BJ (cell line): ENCODE measurements at regions of chr19 and their contacts with region 1.

Region 1: GRCh38 chr19:35363001-35363590 is 4.8 kb downstream of the FFAR3 start:
- DNase-seq: no peak
- H3K4me3 ChIP-seq: no peak overlapping the region
- H3K27me3 ChIP-seq: no peaks in the 10 kb centered on the region; the same call in none of the 2 replicates
- CTCF ChIP-seq: no peak

Region 2: GRCh38 chr19:35279985-35280821 is 82.9 kb before region 1 on chr19:
- CTCF ChIA-PET with region 1: no interaction called
- POLR2A ChIA-PET with region 1: no interaction called
- DNase-seq: no peak
- H3K4me3 ChIP-seq: no peak overlapping the region
- H3K27me3 ChIP-seq: peaks cover 13% of the 10 kb centered on the region
- CTCF ChIP-seq: no peak

Region 3: GRCh38 chr19:35352448-35353304 is 10.4 kb before region 1 on chr19:
- CTCF ChIA-PET with region 1: interaction called, 18 read pairs
- POLR2A ChIA-PET with region 1: no interaction called
- DNase-seq: peak; percentile 3
- H3K4me3 ChIP-seq: no peak overlapping the region
- H3K27me3 ChIP-seq: peaks cover 2% of the 10 kb centered on the region; the same call in 1 of the 2 replicates
- CTCF ChIP-seq: peak; percentile 80

Region 4: DNA sequence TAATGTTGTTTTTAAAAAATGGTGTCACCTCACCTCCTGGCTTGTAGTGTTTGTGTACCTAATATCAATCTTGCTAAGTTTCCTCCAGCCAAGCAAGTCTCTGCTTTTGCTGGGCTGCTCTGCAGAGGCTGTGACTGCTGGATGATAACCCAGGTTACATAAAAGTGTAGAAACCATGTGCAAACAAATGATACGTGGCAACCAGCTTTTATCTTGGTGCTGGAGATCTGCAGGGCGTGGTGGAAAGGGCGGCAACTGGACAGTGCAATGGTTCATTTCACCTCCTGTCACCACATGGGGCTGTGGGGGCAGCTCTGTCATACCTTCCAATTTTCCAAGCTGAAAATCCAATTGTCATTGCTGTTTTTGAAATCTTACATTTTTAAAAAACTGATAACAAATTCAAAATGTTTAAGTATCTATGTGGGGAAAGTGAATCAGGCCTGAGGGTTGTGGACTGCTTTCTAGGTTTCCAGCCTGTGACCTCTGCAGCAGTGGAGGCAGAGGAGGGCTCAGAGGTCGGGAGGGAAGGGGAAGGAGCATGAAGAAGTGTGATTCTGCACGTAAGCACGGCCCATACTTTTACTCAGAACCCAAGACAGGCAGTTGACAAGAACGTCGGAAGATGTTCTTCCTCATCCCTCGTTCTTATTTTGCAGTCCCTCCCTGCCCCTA is 17.5 kb after region 1 on chr19:
- CTCF ChIA-PET with region 1: no interaction called
- POLR2A ChIA-PET with region 1: no interaction called
- DNase-seq: no peak
- H3K4me3 ChIP-seq: no peak overlapping the region
- H3K27me3 ChIP-seq: no peaks in the 10 kb centered on the region
- CTCF ChIP-seq: no peak

Region 5: DNA sequence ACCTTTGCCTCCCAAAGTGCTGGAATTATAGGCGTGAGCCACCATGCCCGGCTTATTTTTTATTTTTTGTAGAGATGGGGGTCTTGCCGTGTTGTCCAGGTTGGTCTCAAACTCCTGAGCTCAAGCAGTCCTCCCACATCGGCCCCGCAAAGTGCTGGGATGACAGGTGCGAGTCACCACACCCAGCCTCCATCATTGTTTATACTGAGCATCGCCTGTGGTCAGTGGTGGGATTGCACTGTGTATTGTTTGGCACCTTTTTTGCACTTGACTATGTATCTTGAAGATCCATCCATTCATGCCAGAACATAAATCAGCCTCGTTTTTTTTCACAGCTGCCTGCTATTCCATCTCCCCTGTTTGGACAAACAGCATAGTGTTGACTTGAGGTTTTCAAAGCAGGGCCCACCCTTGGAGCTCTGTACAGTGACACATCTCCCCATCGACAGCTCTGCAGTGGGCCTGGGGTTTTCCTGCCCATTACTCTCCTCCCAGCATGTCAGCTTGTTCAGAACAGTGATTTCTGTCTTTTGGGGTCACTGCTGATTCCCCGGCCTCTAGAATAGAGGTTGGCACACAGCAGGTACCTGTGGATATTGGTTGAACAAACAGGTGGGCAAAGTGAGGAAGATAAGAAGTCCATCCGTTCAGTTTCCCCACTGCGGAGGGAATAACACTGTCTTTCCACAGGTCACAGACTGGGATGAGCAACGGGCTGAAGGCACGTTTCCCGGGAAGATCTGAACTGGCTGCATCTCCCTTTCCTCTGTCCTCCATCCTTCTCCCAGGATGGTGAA is 295.0 kb after region 1 on chr19:
- CTCF ChIA-PET with region 1: no interaction called
- POLR2A ChIA-PET with region 1: no interaction called
- DNase-seq: no peak
- H3K4me3 ChIP-seq: no peak overlapping the region
- H3K27me3 ChIP-seq: no peaks in the 10 kb centered on the region
- CTCF ChIP-seq: no peak